OCI-LY7 (cell line): ENCODE measurements at regions of chr1 and their contacts with region 1.

Region 1: DNA sequence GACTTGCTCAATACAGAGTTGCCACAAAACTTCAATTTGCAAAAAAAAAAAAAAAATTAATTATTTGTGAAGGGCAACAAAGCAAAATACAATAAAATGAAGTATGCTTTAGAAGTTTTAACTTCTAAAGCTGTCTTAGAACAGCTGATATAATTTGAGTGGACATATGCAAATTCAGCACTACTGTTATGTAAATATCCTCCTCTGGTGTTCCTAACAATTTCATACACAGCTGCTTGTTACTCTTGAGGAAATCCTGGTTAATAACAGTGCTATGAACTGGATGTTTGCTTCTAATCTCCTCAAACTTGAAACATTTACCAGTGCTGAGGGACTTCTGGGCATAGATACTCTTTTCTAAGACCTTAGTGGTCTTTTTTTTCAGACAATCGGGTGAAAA is 69.6 kb upstream of the COL24A1 start:
- DNase-seq: no peak
- H3K4me3 ChIP-seq: no peak overlapping the region
- H3K27ac ChIP-seq: no peak overlapping the region
- H3K4me1 ChIP-seq: peaks cover 11% of the 10 kb centered on the region
- CTCF ChIP-seq: no peak

Region 2: GRCh38 chr1:86154571-86155050 is 71.6 kb before region 1 on chr1:
- CTCF ChIA-PET with region 1: no interaction called
- POLR2A ChIA-PET with region 1: interaction called, 14 read pairs
- intact Hi-C with region 1: no loop called
- DNase-seq: no peak
- H3K4me3 ChIP-seq: no peak overlapping the region
- H3K27ac ChIP-seq: no peak overlapping the region
- H3K4me1 ChIP-seq: no peaks in the 10 kb centered on the region
- CTCF ChIP-seq: no peak

Region 3: GRCh38 chr1:87497380-87498203 is 1271.4 kb after region 1 on chr1:
- CTCF ChIA-PET with region 1: no interaction called
- POLR2A ChIA-PET with region 1: no interaction called
- intact Hi-C with region 1: no loop called
- DNase-seq: no peak
- H3K4me3 ChIP-seq: no peak overlapping the region
- H3K27ac ChIP-seq: no peak overlapping the region
- H3K4me1 ChIP-seq: no peaks in the 10 kb centered on the region
- CTCF ChIP-seq: no peak